Activated T-helper 1 cell treated with anti-CD3 and anti-CD28 coated beads, Interleukin-12 subunit alpha, Interleukin-12 subunit beta, Interleukin-2, Interleukin-4 antibody, amounts not matched to agents 30 ng/mL and 10 ng/mL and 1 ng/mL, durations not matched to agents 14 hours and 24 hours and 36 hours (primary cell): ENCODE measurements at regions of chr2 and their contacts with region 1.

Region 1: GRCh38 chr2:172465417-172466334 is 38.3 kb downstream of the ITGA6 start:
- DNase-seq: peak; percentile 61
- H3K4me3 Mint-ChIP-seq: peak overlapping the region; percentile 15
- H3K27ac Mint-ChIP-seq: no peak overlapping the region
- H3K4me1 Mint-ChIP-seq: peaks cover 54% of the 10 kb centered on the region
- H3K27me3 Mint-ChIP-seq: no peaks in the 10 kb centered on the region

Region 2: GRCh38 chr2:171598713-171599319 is 866.9 kb before region 1 on chr2:
- intact Hi-C with region 1: loop called (anchors 1 kb)
- DNase-seq: peak; percentile 26
- H3K4me3 Mint-ChIP-seq: no peak overlapping the region
- H3K27ac Mint-ChIP-seq: no peak overlapping the region
- H3K4me1 Mint-ChIP-seq: peaks cover 4% of the 10 kb centered on the region
- H3K27me3 Mint-ChIP-seq: peaks cover 11% of the 10 kb centered on the region

Region 3: DNA sequence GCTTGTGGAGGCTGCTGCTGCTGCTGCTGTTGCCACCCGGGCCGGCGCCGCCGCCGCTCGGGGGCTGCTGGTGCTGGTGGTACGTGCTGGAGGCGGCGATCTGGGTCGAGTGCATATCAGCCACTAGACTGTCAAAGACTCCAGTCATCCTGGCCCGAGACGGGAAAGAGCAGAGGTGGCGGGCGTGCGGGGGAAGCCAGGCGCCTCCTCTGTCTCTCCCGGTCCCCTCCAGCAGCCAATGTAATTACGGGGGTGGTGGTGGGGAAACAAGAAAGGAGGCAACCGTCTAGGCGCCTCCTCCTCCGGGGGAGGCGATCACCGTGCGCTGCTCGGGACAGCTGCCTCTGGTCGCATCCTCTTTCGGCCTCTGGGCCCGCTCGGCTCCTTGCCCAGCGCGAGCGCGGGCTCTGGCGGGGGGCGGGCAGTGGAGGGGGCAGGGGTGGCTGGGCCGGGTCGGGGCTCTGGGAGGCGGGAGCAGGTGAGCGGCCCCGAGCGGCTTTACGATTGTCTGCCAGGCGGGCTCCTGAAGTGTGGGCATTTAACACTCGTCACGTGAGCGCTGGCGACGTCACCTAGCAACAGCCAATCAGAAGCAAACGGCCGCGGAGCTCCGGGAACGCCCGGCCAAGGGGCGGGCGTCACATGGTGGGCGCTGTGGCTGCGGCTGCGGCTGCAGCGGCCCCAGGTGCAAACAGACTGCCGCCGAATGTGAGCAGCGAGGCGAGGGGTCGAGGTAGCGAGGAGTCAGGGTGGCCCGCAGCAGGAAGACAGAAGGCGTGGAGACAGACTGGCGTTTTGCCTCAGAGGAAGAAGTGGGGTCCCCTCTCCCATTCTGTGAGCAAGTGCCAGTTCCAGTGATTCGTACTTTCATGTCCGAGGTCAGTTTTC is 363.0 kb before region 1 on chr2 and contains the start of gene DLX2:
- intact Hi-C with region 1: loop called (anchors 2 kb)
- DNase-seq: peak; percentile 44
- H3K4me3 Mint-ChIP-seq: peak within 1 kb of the TSS; percentile 71
- H3K27ac Mint-ChIP-seq: peak within 1 kb of the TSS; percentile 82
- H3K4me1 Mint-ChIP-seq: peaks cover 52% of the 10 kb centered on the region
- H3K27me3 Mint-ChIP-seq: peaks cover 73% of the 10 kb centered on the region
- total RNA-seq, gene DLX2: 0.20 TPM in 1 of 2 replicates, not detected in the other

Region 4: DNA sequence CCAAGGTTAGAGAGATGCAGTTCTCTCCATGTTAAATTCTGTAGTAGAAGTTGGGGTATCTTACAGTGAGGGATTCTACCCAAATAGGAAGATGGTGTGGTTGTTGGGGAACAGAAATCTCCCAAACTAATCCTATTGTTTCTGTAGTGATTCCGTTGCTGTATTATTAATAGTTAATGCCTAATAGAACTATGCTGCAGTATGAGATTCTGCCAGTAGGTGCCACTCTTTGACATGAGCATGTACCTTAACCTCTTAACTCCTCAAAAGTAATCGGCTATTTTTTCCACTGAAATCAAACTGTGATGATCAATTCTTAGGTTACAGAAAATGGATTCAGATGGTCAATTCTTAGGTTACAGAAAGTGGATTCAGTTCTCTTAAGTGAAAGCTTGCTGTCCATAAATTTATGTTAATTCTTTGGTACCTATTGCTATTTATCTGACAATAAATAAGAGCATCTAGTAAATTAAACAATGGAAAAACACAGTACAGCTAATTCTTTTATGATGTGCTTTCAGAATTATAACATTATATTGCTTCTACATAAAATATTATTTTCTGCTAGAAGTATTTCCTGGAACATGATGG is 265.1 kb before region 1 on chr2:
- intact Hi-C with region 1: loop called (anchors 1 kb)
- DNase-seq: no peak
- H3K4me3 Mint-ChIP-seq: no peak overlapping the region
- H3K27ac Mint-ChIP-seq: no peak overlapping the region
- H3K4me1 Mint-ChIP-seq: peaks cover 27% of the 10 kb centered on the region
- H3K27me3 Mint-ChIP-seq: peaks cover 7% of the 10 kb centered on the region

Region 5: GRCh38 chr2:172427256-172427989 is 38.3 kb before region 1 on chr2 and contains the start of gene ITGA6:
- intact Hi-C with region 1: loop called (anchors 1 kb)
- DNase-seq: peak; percentile 66
- H3K4me3 Mint-ChIP-seq: peak within 1 kb of the TSS; percentile 85
- H3K27ac Mint-ChIP-seq: peak within 1 kb of the TSS; percentile 70
- H3K4me1 Mint-ChIP-seq: peaks cover 45% of the 10 kb centered on the region
- H3K27me3 Mint-ChIP-seq: peaks cover 34% of the 10 kb centered on the region
- total RNA-seq, gene ITGA6: 1.9 TPM in 2 replicates

Region 6: DNA sequence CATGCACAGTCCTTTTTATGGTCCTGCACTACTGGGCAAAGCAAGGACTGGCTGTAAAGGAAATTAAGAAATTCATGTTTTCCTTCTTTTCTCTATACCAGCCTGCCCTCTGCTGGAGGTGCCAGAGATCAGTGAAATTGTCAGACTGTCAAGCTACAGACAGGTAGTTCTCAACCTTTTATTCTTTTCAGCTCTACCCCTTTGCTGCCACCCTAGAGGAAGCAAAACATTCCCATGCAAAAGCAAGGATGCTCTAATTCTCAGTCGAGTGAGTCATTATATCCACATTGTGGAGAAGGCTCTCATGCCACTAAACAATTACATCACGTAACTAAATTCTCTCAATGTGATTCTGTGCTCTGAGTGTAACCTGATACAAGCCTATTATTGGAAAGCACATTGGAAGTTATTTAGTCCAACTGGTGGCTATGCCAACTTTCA is 244.9 kb after region 1 on chr2:
- intact Hi-C with region 1: loop called (anchors 5 kb)
- DNase-seq: no peak
- H3K4me3 Mint-ChIP-seq: no peak overlapping the region
- H3K27ac Mint-ChIP-seq: no peak overlapping the region
- H3K4me1 Mint-ChIP-seq: no peaks in the 10 kb centered on the region
- H3K27me3 Mint-ChIP-seq: peaks cover 22% of the 10 kb centered on the region